ENCODE measurements at regions of chr16 and their contacts with region 1.

Region 1: GRCh38 chr16:57591086-57591869 is 37.2 kb upstream of the ADGRG1 start:
- DNase-seq: peak; percentile 87
- H3K4me3 Mint-ChIP-seq: no peak overlapping the region
- H3K27ac Mint-ChIP-seq: peak overlapping the region; percentile 36
- H3K4me1 Mint-ChIP-seq: peaks cover 14% of the 10 kb centered on the region
- H3K27me3 Mint-ChIP-seq: no peaks in the 10 kb centered on the region
- CTCF ChIP-seq: peak; percentile 88

Region 2: DNA sequence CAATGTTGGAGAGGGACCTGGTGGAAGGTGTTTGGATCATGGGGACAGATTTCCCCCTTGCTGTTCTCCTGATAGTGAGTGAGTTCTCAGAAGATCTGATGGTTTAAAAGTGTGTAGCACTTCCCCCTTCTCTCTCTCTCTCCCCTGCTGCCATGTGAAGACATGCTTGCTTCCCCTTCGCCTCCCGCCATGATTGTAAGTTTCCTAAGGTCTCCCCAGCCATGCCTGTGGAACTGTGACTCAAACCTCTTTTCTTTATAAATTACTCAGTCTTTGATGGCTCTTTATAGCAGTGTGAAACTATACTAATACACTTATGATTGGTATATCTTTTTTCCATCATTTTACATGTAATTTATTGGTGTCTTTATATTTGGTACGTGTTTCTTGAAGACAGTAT is 35.4 kb before region 1 on chr16:
- CTCF ChIA-PET with region 1: no interaction called
- POLR2A ChIA-PET with region 1: no interaction called
- intact Hi-C with region 1: no loop called
- DNase-seq: no peak
- H3K4me3 Mint-ChIP-seq: no peak overlapping the region
- H3K27ac Mint-ChIP-seq: no peak overlapping the region
- H3K4me1 Mint-ChIP-seq: no peaks in the 10 kb centered on the region
- H3K27me3 Mint-ChIP-seq: peaks cover 58% of the 10 kb centered on the region
- CTCF ChIP-seq: no peak

Region 3: DNA sequence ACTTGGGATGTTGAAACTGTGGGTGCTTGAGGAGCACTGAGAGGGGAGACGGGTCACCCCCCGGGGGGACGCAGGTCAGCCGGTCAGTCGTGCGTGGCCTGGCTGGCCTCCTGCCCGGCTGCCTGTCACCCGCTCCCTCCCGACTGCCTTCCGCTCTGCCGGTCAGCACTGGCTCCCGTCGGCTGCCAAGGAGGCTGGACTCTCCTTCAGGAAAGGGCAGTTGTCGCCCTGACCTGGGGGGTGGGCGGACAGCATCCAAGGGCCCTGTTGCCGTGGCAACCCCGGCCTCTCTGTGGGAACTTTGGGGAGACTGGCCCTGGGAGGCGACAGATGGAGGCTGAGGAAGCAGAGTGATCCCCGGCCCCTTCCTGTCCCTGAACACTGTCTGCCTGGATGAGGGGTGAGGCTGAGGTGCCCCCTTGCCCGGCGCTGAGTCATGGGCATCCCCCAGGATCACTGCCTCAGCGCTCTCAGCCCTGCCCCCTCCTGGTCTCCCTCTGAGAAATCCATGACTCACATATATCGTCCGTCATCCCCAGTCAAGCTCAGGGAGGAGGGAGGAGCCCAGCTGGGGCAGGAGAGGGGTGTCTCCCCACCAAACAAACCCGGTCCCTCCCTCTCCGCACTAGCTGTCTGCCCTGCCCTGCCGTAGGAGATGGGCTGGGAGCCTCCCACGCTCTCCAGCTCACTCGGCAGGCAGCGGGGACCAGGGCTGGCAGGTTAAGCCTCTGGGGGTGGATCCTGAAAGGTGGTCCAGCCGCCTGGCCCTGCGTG is 36.9 kb after region 1 on chr16 and contains the start of gene ADGRG1:
- CTCF ChIA-PET with region 1: interaction called, 5 read pairs
- POLR2A ChIA-PET with region 1: interaction called, 4 read pairs
- intact Hi-C with region 1: loop called (anchors 1 kb)
- DNase-seq: peak; percentile 96
- H3K4me3 Mint-ChIP-seq: no peak within 1 kb of the TSS
- H3K27ac Mint-ChIP-seq: no peak within 1 kb of the TSS
- H3K4me1 Mint-ChIP-seq: peaks cover 39% of the 10 kb centered on the region
- H3K27me3 Mint-ChIP-seq: no peaks in the 10 kb centered on the region
- CTCF ChIP-seq: no peak
- total RNA-seq, gene ADGRG1: 10.1 and 10.2 TPM in 2 replicates

Region 4: GRCh38 chr16:57720142-57720575 is 128.9 kb after region 1 on chr16:
- CTCF ChIA-PET with region 1: no interaction called
- POLR2A ChIA-PET with region 1: no interaction called
- intact Hi-C with region 1: loop called (anchors 2 kb)
- DNase-seq: peak; percentile 69
- H3K4me3 Mint-ChIP-seq: no peak overlapping the region
- H3K27ac Mint-ChIP-seq: no peak overlapping the region
- H3K4me1 Mint-ChIP-seq: no peaks in the 10 kb centered on the region
- H3K27me3 Mint-ChIP-seq: peaks cover 1% of the 10 kb centered on the region
- CTCF ChIP-seq: peak; percentile 64

Region 5: GRCh38 chr16:57734925-57735754 is 143.9 kb after region 1 on chr16:
- CTCF ChIA-PET with region 1: interaction called, 3 read pairs
- POLR2A ChIA-PET with region 1: interaction called, 5 read pairs
- intact Hi-C with region 1: loop called (anchors 5 kb)
- DNase-seq: peak; percentile 100
- H3K4me3 Mint-ChIP-seq: peak overlapping the region; percentile 93
- H3K27ac Mint-ChIP-seq: peak overlapping the region; percentile 96
- H3K4me1 Mint-ChIP-seq: peaks cover 23% of the 10 kb centered on the region
- H3K27me3 Mint-ChIP-seq: no peaks in the 10 kb centered on the region
- CTCF ChIP-seq: no peak

Measured in MCF 10A (cell line).